Activated B cell treated with CpG ODN at 0.5 μM for 24 hours (primary cell): ENCODE measurements at regions of chr3 and their contacts with region 1.

Region 1: GRCh38 chr3:14947886-14948555 is 638 bp downstream of the NR2C2 start:
- DNase-seq: peak; percentile 96
- ATAC-seq: peak; percentile 88
- H3K4me3 Mint-ChIP-seq: peak overlapping the region; percentile 99
- H3K27ac Mint-ChIP-seq: peak overlapping the region; percentile 100
- H3K4me1 Mint-ChIP-seq: peaks cover 55% of the 10 kb centered on the region
- H3K27me3 Mint-ChIP-seq: no peaks in the 10 kb centered on the region
- CTCF ChIP-seq: no peak

Region 2: DNA sequence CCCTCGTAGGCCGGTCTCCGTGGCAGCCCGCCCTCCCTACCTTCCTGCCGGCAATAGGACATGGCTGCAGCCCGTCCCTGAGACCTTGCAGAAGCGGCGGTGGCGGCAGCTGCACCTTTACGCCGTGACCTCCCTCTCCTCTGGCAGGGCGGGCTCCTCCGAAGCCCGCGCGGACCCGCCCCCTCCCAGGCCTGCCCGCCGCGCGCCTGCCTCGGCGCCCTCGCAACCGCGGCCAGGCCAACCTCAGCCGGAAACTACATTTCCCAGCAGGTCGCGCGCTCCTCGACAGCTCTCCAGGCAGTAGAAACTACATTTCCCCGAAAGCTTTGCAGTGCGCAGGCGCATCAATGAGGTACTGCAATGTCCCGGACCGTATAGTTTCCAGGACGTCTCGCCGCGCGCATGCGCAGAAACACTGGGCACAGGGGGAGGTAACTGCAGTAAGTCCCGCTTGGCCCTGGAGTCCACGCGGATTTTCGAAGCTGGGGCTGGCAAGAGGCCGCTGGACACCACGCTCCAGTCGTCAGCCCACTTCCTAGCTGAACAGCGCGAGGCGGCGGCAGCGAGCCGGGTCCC is 823.3 kb before region 1 on chr3 and contains the starts of genes CHCHD4 and TMEM43:
- CTCF ChIA-PET with region 1: no interaction called
- POLR2A ChIA-PET with region 1: interaction called, 3 read pairs
- intact Hi-C with region 1: loop called (anchors 1 kb)
- DNase-seq: peak; percentile 92
- ATAC-seq: peak; percentile 86
- H3K4me3 Mint-ChIP-seq: peak within 1 kb of the TSS; percentile 94
- H3K27ac Mint-ChIP-seq: peak within 1 kb of the TSS; percentile 87
- H3K4me1 Mint-ChIP-seq: peaks cover 40% of the 10 kb centered on the region
- H3K27me3 Mint-ChIP-seq: no peaks in the 10 kb centered on the region
- CTCF ChIP-seq: no peak
- total RNA-seq, gene CHCHD4: 9.2 and 9.8 TPM in 2 replicates
- total RNA-seq, gene TMEM43: 30.7 and 32.3 TPM in 2 replicates

Region 3: DNA sequence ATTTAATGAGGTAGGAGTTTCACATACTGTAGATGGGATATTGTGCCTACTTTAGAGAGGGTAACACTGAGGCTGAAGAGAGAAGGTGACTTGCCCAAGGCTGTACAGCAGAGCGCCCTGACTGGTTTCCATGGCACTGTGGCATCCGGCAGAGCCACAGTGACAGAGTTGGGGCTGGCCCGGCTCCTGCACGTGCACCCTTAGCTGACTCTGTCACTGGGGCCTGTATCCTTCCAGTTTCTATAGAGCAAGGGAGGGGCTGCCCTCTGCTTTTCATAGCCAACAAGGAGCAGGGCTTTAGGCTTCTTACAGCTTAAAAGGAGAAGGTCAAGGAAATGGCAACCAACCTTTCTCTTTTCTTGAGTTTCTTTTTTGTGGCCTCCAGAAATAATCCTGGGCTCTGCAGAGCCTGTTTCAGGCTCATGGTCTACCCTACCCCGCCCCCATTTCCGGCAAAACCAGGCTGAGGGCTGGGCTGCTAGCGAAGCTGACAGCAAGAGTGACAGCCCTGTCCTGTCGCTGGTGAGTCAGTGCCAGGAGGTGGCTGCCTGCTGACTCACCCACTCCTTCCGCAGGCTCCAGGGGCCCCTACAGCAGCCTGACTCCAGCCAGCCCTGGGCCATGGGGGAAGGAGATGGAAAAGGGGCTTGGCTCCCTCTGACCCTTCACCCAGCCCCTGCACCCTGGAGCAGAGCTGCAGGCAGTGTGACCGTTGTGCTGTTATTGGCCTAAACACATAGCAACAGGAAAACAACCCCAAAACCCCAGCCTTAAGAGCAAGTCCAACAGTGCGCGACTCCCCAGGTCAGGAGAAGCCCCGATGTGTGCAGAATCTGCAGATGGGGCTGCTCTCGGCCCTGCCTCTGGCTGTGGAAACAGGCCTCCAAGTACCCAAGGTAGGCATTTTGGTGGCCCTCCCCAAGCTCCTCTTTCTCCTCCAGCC is 515.9 kb before region 1 on chr3:
- CTCF ChIA-PET with region 1: no interaction called
- POLR2A ChIA-PET with region 1: no interaction called
- intact Hi-C with region 1: loop called (anchors 1 kb)
- DNase-seq: peak; percentile 76
- ATAC-seq: peak; percentile 75
- H3K4me3 Mint-ChIP-seq: peak overlapping the region; percentile 72
- H3K27ac Mint-ChIP-seq: peak overlapping the region; percentile 94
- H3K4me1 Mint-ChIP-seq: peaks cover 90% of the 10 kb centered on the region
- H3K27me3 Mint-ChIP-seq: no peaks in the 10 kb centered on the region
- CTCF ChIP-seq: no peak

Region 4: DNA sequence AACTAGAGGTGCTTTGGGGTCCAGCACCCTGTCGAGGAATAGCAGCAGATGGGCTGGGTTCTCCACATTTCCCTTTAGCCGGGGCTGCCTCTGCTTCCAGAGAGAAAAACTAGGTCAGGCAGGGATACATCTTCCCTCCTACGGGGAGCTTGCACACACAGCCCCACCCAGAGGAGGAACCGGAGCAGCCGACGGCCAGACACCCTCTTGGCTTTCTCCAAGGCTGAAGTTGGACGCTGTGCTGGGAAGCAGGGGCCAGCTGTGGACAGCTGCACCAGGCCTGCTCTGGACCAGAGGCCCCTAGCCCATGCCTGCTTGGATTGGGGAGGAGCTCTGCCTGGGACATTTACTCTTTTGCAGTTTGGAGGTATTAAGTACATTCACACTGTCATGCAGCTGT is 45.3 kb before region 1 on chr3:
- CTCF ChIA-PET with region 1: no interaction called
- POLR2A ChIA-PET with region 1: no interaction called
- intact Hi-C with region 1: no loop called
- DNase-seq: no peak
- ATAC-seq: no peak
- H3K4me3 Mint-ChIP-seq: no peak overlapping the region
- H3K27ac Mint-ChIP-seq: no peak overlapping the region
- H3K4me1 Mint-ChIP-seq: no peaks in the 10 kb centered on the region
- H3K27me3 Mint-ChIP-seq: peaks cover 28% of the 10 kb centered on the region
- CTCF ChIP-seq: no peak

Region 5: GRCh38 chr3:14959359-14959943 is 11.4 kb after region 1 on chr3:
- CTCF ChIA-PET with region 1: no interaction called
- POLR2A ChIA-PET with region 1: interaction called, 7 read pairs
- intact Hi-C with region 1: loop called (anchors 1 kb)
- DNase-seq: no peak
- ATAC-seq: peak; percentile 28
- H3K4me3 Mint-ChIP-seq: peak overlapping the region; percentile 82
- H3K27ac Mint-ChIP-seq: peak overlapping the region; percentile 87
- H3K4me1 Mint-ChIP-seq: peaks cover 46% of the 10 kb centered on the region
- H3K27me3 Mint-ChIP-seq: no peaks in the 10 kb centered on the region
- CTCF ChIP-seq: no peak

Region 6: DNA sequence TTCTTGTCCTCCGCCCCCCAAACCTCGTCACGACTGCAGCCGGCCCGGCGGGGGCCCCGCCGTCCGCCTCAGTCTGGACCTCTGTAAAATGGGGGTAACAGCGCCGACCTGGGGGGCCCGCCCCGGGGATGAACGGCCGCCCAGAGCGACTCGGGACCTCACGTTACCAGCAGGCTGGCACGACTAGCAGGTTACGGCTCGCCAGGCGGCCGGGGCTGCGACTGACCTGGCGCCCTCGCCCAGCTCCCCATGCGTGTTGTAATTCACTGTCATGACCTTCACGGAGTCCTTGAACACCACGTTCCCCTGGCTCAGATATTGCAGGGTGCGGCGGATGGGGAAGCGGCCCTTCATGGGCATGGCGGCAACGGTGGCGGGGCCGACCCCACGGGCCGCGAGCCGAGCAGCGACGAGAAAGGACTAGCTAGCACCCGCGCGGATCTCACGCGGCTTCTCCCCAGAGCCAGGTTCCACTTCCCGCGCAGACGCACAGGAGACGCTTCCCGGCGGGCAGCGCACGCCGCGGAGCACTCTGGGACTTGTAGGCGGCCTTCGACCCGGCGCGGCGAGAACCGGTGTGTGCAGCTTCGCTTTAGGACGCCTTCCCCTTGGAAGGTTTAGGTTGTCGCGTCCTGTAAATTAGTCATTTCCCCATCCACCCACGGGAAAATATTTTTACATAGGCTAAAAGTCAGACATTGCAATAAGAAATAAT is 117.0 kb after region 1 on chr3 and contains the start of gene MRPS25:
- CTCF ChIA-PET with region 1: no interaction called
- POLR2A ChIA-PET with region 1: interaction called, 11 read pairs
- intact Hi-C with region 1: loop called (anchors 1 kb)
- DNase-seq: peak; percentile 84
- ATAC-seq: peak; percentile 97
- H3K4me3 Mint-ChIP-seq: peak within 1 kb of the TSS; percentile 98
- H3K27ac Mint-ChIP-seq: peak within 1 kb of the TSS; percentile 95
- H3K4me1 Mint-ChIP-seq: peaks cover 25% of the 10 kb centered on the region
- H3K27me3 Mint-ChIP-seq: no peaks in the 10 kb centered on the region
- CTCF ChIP-seq: no peak
- total RNA-seq, gene MRPS25: 72.4 and 85.9 TPM in 2 replicates

Region 7: DNA sequence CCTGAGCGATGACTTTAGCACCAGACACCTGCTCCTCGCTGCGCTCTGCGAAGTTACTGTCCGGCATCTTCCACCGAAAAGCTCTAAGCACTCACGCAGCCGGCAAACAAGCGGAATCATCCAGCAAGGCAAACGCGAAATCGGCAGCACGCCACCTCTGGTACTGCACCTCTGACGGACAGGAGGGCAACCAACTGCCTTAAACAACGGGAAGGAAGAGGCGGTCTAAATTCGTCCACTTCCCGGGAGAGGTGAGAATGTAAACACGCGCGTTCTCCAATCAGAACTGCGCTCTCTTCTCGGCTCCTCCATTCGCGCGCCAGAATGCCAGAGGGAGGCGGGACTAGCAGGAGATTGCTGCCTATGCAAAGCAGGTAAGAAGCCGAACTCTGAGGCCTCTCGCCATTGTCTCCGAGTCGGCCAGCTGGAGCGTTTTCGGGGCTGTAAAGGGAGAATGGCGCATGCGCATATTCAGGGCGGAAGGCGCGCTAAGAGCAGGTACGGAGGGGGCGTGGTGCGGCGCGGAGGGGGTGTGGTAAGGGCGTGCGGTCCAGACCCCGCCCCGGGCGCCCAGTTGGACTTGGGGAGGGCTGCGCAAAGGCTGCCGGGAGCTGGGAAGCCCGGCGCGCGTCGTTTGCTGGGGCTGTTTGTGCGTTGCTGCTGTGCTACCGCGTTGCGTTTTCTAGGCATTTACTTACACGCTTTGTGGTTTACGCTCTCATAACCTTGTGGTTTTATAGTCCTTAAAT is 653.5 kb after region 1 on chr3 and contains the starts of genes BTD and HACL1:
- CTCF ChIA-PET with region 1: no interaction called
- POLR2A ChIA-PET with region 1: no interaction called
- intact Hi-C with region 1: loop called (anchors 1 kb)
- DNase-seq: peak; percentile 97
- ATAC-seq: peak; percentile 89
- H3K4me3 Mint-ChIP-seq: peak within 1 kb of the TSS; percentile 94
- H3K27ac Mint-ChIP-seq: peak within 1 kb of the TSS; percentile 98
- H3K4me1 Mint-ChIP-seq: peaks cover 38% of the 10 kb centered on the region
- H3K27me3 Mint-ChIP-seq: no peaks in the 10 kb centered on the region
- CTCF ChIP-seq: no peak
- total RNA-seq, gene BTD: 7.6 and 9.1 TPM in 2 replicates
- total RNA-seq, gene HACL1: 24.7 and 28.4 TPM in 2 replicates